Activated CD4-positive, alpha-beta T cell treated with anti-CD3 and anti-CD28 coated beads, Interleukin-2, amount 10 ng/mL, durations not matched to agents 7 days and 5 days (primary cell): ENCODE measurements at regions of chr2 and their contacts with region 1.

Region 1: DNA sequence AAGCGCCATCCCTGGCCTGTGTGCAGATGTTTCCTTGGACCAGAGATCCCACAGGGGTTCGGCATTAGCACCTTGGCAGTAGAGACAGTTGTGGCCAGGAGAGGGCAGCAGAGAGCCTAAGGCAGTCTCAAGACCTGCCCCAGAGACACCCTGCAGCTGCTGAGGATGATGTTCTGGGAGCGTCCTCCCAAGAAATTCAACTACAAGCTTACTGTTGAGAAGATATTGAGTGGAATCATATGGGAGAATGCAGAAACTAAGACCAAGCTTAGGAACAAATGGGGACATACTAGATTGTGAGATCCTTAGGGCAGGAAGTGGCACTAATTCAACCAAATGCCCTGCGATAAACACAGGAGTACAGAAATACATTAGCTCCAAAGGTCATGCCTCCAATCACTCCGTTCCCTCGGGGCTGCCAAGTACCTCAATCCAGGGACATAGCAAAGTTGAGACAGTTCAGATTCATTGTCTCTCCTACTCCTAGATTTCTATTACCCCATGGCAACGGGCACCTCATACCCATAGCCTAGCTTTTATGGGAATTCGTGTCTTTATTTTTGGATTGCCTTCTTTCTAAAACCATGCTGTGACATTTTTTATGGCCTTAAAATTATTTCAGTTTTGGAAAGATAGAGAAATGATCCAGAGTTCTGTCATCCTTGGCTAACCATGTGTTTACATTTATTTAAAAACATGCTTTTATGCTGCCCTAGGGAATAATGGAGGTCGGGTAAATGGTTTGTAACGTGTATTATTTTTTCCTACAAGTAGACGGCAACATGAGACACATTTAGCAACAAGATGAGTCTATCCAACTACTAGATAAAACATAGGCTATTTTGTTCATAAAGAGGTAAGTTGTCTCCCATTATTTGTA is 2.2 kb upstream of the ERMN start:
- DNase-seq: peak; percentile 90
- H3K4me3 Mint-ChIP-seq: no peak overlapping the region
- H3K27ac Mint-ChIP-seq: peak overlapping the region; percentile 78
- H3K4me1 Mint-ChIP-seq: peaks cover 55% of the 10 kb centered on the region
- H3K27me3 Mint-ChIP-seq: no peaks in the 10 kb centered on the region

Region 2: DNA sequence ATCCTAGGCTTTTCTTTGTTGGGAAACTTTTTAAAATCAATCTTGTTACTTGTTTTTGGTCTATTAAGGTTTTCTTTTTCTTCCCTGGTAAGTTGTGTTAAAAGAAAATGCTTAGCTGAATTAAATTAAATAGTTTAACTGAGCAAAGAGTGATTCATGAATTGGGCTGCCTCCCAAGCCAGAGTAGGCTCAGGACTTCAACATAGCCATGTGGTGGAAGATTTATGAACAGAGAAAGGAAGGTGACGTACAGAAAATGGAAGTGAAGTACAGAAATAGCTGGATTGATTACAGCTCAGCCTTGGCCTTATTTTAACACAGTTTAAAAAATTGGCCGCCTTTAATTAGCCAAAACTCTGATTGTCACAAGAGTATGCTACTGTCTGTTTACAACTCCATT is 98.3 kb before region 1 on chr2:
- CTCF ChIA-PET with region 1: no interaction called
- POLR2A ChIA-PET with region 1: no interaction called
- DNase-seq: no peak
- H3K4me3 Mint-ChIP-seq: no peak overlapping the region
- H3K27ac Mint-ChIP-seq: no peak overlapping the region
- H3K4me1 Mint-ChIP-seq: no peaks in the 10 kb centered on the region
- H3K27me3 Mint-ChIP-seq: peaks cover 35% of the 10 kb centered on the region

Region 3: GRCh38 chr2:157302492-157303099 is 25.3 kb before region 1 on chr2:
- CTCF ChIA-PET with region 1: interaction called, 29 read pairs
- POLR2A ChIA-PET with region 1: interaction called, 4 read pairs
- DNase-seq: peak; percentile 49
- H3K4me3 Mint-ChIP-seq: no peak overlapping the region
- H3K27ac Mint-ChIP-seq: no peak overlapping the region
- H3K4me1 Mint-ChIP-seq: peaks cover 24% of the 10 kb centered on the region
- H3K27me3 Mint-ChIP-seq: peaks cover 6% of the 10 kb centered on the region

Region 4: GRCh38 chr2:157312866-157313486 is 14.9 kb before region 1 on chr2:
- CTCF ChIA-PET with region 1: interaction called, 10 read pairs
- POLR2A ChIA-PET with region 1: no interaction called
- DNase-seq: no peak
- H3K4me3 Mint-ChIP-seq: no peak overlapping the region
- H3K27ac Mint-ChIP-seq: no peak overlapping the region
- H3K4me1 Mint-ChIP-seq: peaks cover 8% of the 10 kb centered on the region
- H3K27me3 Mint-ChIP-seq: no peaks in the 10 kb centered on the region

Region 5: DNA sequence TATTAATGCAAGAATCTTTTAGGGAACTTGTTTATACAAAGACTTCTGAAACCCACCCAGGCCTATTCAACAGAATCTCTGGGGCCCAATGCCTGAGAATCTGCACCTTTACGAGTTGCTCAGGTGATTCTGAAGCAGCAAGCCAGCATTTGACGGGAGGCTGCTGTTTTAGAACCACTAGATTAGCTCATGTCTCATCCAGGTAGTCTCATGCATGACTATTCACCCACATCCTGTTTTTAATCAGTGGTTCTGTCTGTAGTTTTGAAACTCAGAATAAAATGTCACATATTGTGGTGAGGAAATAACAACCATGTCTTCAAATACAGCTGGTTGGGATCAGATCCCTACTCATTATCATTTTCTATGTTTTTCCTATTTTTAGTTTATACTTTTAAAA is 76.5 kb after region 1 on chr2:
- CTCF ChIA-PET with region 1: interaction called, 11 read pairs
- POLR2A ChIA-PET with region 1: interaction called, 3 read pairs
- DNase-seq: peak; percentile 80
- H3K4me3 Mint-ChIP-seq: peak overlapping the region; percentile 47
- H3K27ac Mint-ChIP-seq: peak overlapping the region; percentile 99
- H3K4me1 Mint-ChIP-seq: peaks cover 74% of the 10 kb centered on the region
- H3K27me3 Mint-ChIP-seq: no peaks in the 10 kb centered on the region

Region 6: DNA sequence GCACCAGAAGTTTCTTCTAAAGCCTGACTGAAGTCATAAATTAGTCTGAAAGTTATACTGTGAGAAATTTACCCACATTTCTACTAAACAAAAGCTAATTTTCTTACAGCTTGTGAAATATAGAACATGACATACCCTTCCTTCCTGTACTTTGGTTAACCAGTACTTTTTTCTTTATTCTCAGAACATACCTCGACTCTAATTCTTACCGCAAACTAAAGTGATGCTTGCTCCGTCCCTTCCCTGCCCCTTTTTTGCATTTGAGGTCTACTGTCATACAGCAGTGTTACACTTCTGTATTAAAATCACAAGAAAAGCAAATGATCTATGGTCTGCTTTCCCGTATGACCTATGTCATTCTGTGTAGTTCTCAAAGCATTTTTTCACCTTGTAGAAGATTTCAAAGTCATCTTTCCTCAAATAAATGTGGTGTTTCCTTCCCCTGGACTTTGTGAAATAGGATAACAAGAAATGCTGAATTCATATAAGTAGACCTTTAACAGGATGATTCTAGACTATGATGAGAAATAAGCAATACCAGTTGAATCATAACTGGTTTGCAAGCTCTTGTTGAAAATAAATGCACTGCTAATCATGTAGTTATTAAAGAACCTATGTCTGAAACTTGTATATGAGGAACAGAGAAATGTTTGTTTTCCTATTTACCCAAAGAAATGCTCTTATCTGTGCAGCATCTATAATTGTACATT is 85.6 kb after region 1 on chr2:
- CTCF ChIA-PET with region 1: interaction called, 17 read pairs
- POLR2A ChIA-PET with region 1: interaction called, 5 read pairs
- DNase-seq: peak; percentile 70
- H3K4me3 Mint-ChIP-seq: peak overlapping the region; percentile 54
- H3K27ac Mint-ChIP-seq: peak overlapping the region; percentile 94
- H3K4me1 Mint-ChIP-seq: peaks cover 87% of the 10 kb centered on the region
- H3K27me3 Mint-ChIP-seq: no peaks in the 10 kb centered on the region

Region 7: GRCh38 chr2:157492189-157492773 is 164.4 kb after region 1 on chr2:
- CTCF ChIA-PET with region 1: interaction called, 22 read pairs
- POLR2A ChIA-PET with region 1: no interaction called
- DNase-seq: peak; percentile 80
- H3K4me3 Mint-ChIP-seq: no peak overlapping the region
- H3K27ac Mint-ChIP-seq: no peak overlapping the region
- H3K4me1 Mint-ChIP-seq: peaks cover 68% of the 10 kb centered on the region
- H3K27me3 Mint-ChIP-seq: no peaks in the 10 kb centered on the region

Region 8: GRCh38 chr2:157747695-157748370 is 420.0 kb after region 1 on chr2:
- CTCF ChIA-PET with region 1: no interaction called
- POLR2A ChIA-PET with region 1: no interaction called
- DNase-seq: no peak
- H3K4me3 Mint-ChIP-seq: no peak overlapping the region
- H3K27ac Mint-ChIP-seq: no peak overlapping the region
- H3K4me1 Mint-ChIP-seq: peaks cover 33% of the 10 kb centered on the region
- H3K27me3 Mint-ChIP-seq: no peaks in the 10 kb centered on the region